ENCODE measurements at regions of chr1 and their contacts with region 1.

Region 1: GRCh38 chr1:113854234-113854633 is 17.3 kb downstream of the PTPN22 start:
- DNase-seq: no peak
- H3K4me3 ChIP-seq: no peak overlapping the region
- H3K27ac ChIP-seq: no peak overlapping the region
- H3K27me3 ChIP-seq: no peaks in the 10 kb centered on the region
- CTCF ChIP-seq: no peak

Region 2: GRCh38 chr1:113871597-113872113 is 17.4 kb after region 1 on chr1 and contains the start of gene PTPN22:
- CTCF ChIA-PET with region 1: interaction called, 10 read pairs
- POLR2A ChIA-PET with region 1: interaction called, 5 read pairs
- DNase-seq: peak; percentile 16
- H3K4me3 ChIP-seq: no peak within 1 kb of the TSS
- H3K27ac ChIP-seq: no peak within 1 kb of the TSS
- H3K27me3 ChIP-seq: no peaks in the 10 kb centered on the region
- CTCF ChIP-seq: no peak
- polyA plus RNA-seq, gene PTPN22: 0.17 and 0.21 TPM in 2 replicates

Region 3: DNA sequence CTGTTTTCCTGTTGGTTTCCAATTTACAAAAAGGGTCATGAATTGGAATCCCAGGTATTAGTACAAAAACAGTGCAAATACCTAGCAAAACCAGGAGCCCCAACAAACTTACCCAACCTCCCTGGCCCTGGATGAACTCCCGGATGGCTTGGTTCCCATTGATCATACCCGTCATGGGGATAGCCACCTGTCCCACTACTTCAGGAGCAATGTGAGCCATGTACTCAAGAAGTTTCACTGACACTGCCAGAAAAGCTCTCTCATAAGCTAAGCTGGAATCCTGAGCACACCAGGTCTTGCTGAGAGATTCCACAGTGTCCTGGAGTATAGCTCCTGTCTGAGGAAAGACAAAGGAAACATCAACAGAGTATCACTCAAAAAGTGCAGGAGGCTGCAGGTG is 27.4 kb after region 1 on chr1:
- CTCF ChIA-PET with region 1: no interaction called
- POLR2A ChIA-PET with region 1: no interaction called
- DNase-seq: no peak
- H3K4me3 ChIP-seq: no peak overlapping the region
- H3K27ac ChIP-seq: no peak overlapping the region
- H3K27me3 ChIP-seq: no peaks in the 10 kb centered on the region
- CTCF ChIP-seq: no peak

Region 4: GRCh38 chr1:114015075-114015685 is 160.9 kb after region 1 on chr1:
- CTCF ChIA-PET with region 1: no interaction called
- POLR2A ChIA-PET with region 1: no interaction called
- DNase-seq: no peak
- H3K4me3 ChIP-seq: no peak overlapping the region
- H3K27ac ChIP-seq: no peak overlapping the region
- H3K27me3 ChIP-seq: no peaks in the 10 kb centered on the region
- CTCF ChIP-seq: no peak

Measured in AG04450 (cell line).